H1 (cell line): ENCODE measurements at regions of chr2 and their contacts with region 1.

Region 1: DNA sequence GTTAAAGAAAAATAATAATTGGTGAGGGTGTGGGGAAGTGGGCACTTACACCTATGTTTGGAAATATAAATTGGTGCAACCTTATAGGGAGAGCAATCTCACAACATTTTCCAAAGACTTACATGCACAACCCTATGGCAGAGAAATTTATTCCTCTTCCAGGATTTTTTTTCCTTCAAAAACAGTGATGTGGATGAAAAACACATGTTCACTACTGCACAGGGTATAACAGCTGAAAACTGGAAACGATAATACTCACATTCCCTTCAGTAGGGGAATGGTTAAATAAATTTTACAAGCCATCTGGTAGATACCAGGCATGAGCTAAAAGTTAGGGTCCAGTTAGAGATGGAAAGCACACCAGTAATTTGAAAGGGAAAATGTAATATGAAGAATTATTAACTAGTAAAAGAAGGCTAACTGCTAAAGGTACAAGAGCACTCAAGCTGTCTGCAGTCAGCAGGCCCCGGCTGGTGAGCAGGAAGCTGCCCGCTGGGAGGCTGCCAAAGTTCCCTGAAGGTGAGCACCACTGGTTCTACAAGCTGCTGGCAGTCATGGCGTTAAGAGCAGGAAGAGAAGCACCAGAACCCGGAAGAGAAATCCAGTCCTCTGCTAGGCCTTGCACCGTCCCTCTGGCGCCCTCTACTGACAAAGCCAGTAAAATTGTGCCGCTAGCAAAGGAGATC is 28.4 kb upstream of the CASP8 start:
- DNase-seq: peak; percentile 70 to 89
- H3K4me3 ChIP-seq: no peak overlapping the region
- H3K27ac ChIP-seq: no peak overlapping the region
- H3K4me1 ChIP-seq: no peaks in the 10 kb centered on the region; a peak in 1 of 7 replicates
- H3K27me3 ChIP-seq: no peaks in the 10 kb centered on the region; a peak in 2 of 7 replicates
- CTCF ChIP-seq: peak; percentile 81 to 97 (median 89)
- EP300 ChIP-seq: no peak
- POLR2A ChIP-seq: peak in 1 of 2 experiments; percentile 38; a peak in 1 of 3 replicates
- RAD21 ChIP-seq: peak; percentile 90 to 96

Region 2: DNA sequence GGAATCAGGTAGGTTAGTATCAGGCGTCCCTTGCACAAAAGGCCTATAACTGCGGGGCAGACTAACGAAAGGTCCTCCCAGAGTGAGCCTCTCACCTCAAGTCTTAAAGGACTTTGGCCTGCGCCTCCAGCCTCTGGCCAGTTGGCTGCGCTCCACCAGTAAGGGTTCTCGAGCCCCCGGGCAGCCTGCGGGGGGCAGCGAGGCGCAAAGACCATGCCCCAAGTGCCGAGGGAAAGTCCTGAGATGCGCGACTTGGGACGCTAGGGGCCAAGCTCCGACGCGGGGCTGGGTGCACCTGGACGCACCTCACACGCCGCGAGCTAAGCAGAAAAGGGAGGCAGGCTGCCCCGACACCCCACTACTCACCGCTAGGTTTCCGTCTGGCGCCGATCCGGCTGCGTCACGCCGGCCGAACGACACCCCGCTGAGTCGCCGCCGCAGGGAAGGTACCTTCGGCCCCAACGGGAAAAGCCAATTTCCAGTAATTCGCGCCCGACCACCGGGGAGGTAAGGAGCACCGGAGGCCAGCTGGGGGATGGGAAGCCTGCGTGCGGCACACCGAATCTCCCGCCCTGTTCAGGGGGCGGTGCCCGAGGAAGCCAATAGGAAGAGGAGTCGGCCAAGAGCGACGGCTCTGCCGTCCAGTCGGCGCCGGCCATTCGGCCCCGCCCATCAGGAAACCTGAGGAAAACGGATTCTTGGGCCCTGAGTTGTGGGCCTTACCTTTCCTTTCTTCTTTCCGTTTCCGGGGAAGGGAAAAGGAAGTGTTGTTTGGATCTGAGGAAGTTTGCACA is 268.6 kb before region 1 on chr2 and contains the start of gene ORC2:
- CTCF ChIA-PET with region 1: interaction called, 13 read pairs
- POLR2A ChIA-PET with region 1: no interaction called
- DNase-seq: peak; percentile 94 to 97
- H3K4me3 ChIP-seq: peak within 1 kb of the TSS; percentile 79 to 95 (median 90)
- H3K27ac ChIP-seq: peak within 1 kb of the TSS; percentile 90
- H3K4me1 ChIP-seq: peaks cover 0 to 6% (median 3%) of the 10 kb centered on the region in 4 experiments; a peak in 4 of 7 replicates
- H3K27me3 ChIP-seq: no peaks in the 10 kb centered on the region
- CTCF ChIP-seq: peak; percentile 61 to 88 (median 75)
- EP300 ChIP-seq: peak in 1 of 2 experiments; percentile 47; a peak in 1 of 3 replicates
- POLR2A ChIP-seq: peak; percentile 44 to 80
- RAD21 ChIP-seq: peak; percentile 57 to 69
- total RNA-seq, gene ORC2: 82.3 and 89.8 TPM in 2 replicates

Region 3: GRCh38 chr2:201194097-201194496 is 37.8 kb before region 1 on chr2:
- CTCF ChIA-PET with region 1: interaction called, 12 read pairs
- POLR2A ChIA-PET with region 1: no interaction called
- DNase-seq: no peak
- H3K4me3 ChIP-seq: no peak overlapping the region
- H3K27ac ChIP-seq: no peak overlapping the region
- H3K4me1 ChIP-seq: no peaks in the 10 kb centered on the region
- H3K27me3 ChIP-seq: no peaks in the 10 kb centered on the region
- CTCF ChIP-seq: no peak
- EP300 ChIP-seq: no peak
- POLR2A ChIP-seq: no peak
- RAD21 ChIP-seq: no peak

Region 4: GRCh38 chr2:201220102-201220570 is 11.8 kb before region 1 on chr2:
- CTCF ChIA-PET with region 1: interaction called, 40 read pairs
- POLR2A ChIA-PET with region 1: interaction called, 9 read pairs
- DNase-seq: no peak
- H3K4me3 ChIP-seq: peak overlapping the region in 1 of 4 experiments; percentile 38; a peak in 1 of 8 replicates
- H3K27ac ChIP-seq: no peak overlapping the region
- H3K4me1 ChIP-seq: peaks cover 5 to 23% (median 13%) of the 10 kb centered on the region in 4 experiments; a peak in 6 of 7 replicates
- H3K27me3 ChIP-seq: no peaks in the 10 kb centered on the region
- CTCF ChIP-seq: no peak
- EP300 ChIP-seq: peak in 1 of 2 experiments; percentile 29; a peak in 1 of 3 replicates
- POLR2A ChIP-seq: no peak
- RAD21 ChIP-seq: no peak

Region 5: GRCh38 chr2:201363857-201364560 is 132.1 kb after region 1 on chr2:
- CTCF ChIA-PET with region 1: interaction called, 40 read pairs
- POLR2A ChIA-PET with region 1: no interaction called
- DNase-seq: no peak
- H3K4me3 ChIP-seq: no peak overlapping the region
- H3K27ac ChIP-seq: no peak overlapping the region
- H3K4me1 ChIP-seq: no peaks in the 10 kb centered on the region
- H3K27me3 ChIP-seq: no peaks in the 10 kb centered on the region
- CTCF ChIP-seq: peak in 2 of 3 experiments; percentile 81 to 85; a peak in 3 of 4 replicates
- EP300 ChIP-seq: no peak
- POLR2A ChIP-seq: no peak
- RAD21 ChIP-seq: peak; percentile 88 to 92